Activated T-helper 2 cell treated with anti-CD3 and anti-CD28 coated beads, Interferon-gamma antibody, Interleukin-2, Interleukin-4, amounts not matched to agents 10 μg/mL and 5 μg/mL and 100 μg/mL, durations not matched to agents 14 hours and 24 hours and 36 hours (primary cell): ENCODE measurements at regions of chr10 and their contacts with region 1.

Region 1: GRCh38 chr10:46284293-46285229 is 2.2 kb upstream of the ANTXRL start:
- DNase-seq: peak; percentile 83
- H3K4me3 Mint-ChIP-seq: peak overlapping the region; percentile 88
- H3K27ac Mint-ChIP-seq: peak overlapping the region; percentile 67
- H3K4me1 Mint-ChIP-seq: peaks cover 22% of the 10 kb centered on the region
- H3K27me3 Mint-ChIP-seq: peaks cover 25% of the 10 kb centered on the region

Region 2: GRCh38 chr10:46268076-46268881 is 16.3 kb before region 1 on chr10:
- intact Hi-C with region 1: loop called (anchors 2 kb)
- DNase-seq: no peak
- H3K4me3 Mint-ChIP-seq: no peak overlapping the region
- H3K27ac Mint-ChIP-seq: no peak overlapping the region
- H3K4me1 Mint-ChIP-seq: peaks cover 21% of the 10 kb centered on the region
- H3K27me3 Mint-ChIP-seq: no peaks in the 10 kb centered on the region

Region 3: DNA sequence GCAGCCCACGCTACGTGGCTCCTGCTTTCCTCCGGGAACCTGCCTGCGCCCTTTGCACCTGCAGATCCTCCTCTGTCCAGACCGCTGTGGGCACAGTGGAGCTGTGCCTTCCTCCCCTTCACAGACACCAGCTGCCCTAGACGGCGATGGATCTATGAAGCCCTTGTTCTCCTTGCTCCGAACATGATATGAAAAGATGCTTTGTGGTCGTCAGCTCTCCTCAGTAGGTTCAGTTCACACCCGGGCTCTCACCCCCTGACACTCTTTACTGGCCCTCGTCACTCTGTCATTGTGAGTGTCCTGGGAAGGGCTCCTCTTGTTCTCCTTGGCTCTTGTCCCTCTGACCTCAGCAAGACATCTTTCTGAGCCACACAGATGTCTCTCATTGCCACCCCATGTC is 1095.3 kb after region 1 on chr10:
- intact Hi-C with region 1: loop called (anchors 1 kb)
- DNase-seq: no peak
- H3K4me3 Mint-ChIP-seq: no peak overlapping the region
- H3K27ac Mint-ChIP-seq: no peak overlapping the region
- H3K4me1 Mint-ChIP-seq: peaks cover 25% of the 10 kb centered on the region
- H3K27me3 Mint-ChIP-seq: peaks cover 46% of the 10 kb centered on the region